Activated CD4-positive, alpha-beta T cell treated with anti-CD3 and anti-CD28 coated beads for 36 hours (primary cell): ENCODE measurements at regions of chr16 and their contacts with region 1.

Region 1: GRCh38 chr16:66751303-66751991 is at the start of gene DYNC1LI2:
- DNase-seq: peak; percentile 89
- ATAC-seq: peak; percentile 93
- H3K4me3 Mint-ChIP-seq: peak within 1 kb of the TSS; percentile 81
- H3K27ac Mint-ChIP-seq: peak within 1 kb of the TSS; percentile 80
- H3K4me1 Mint-ChIP-seq: peaks cover 38% of the 10 kb centered on the region
- H3K27me3 Mint-ChIP-seq: peaks cover 9% of the 10 kb centered on the region
- total RNA-seq, gene DYNC1LI2: 32.3 to 35.7 TPM

Region 2: GRCh38 chr16:66304151-66304550 is 447.3 kb before region 1 on chr16:
- CTCF ChIA-PET with region 1: no interaction called
- POLR2A ChIA-PET with region 1: no interaction called
- intact Hi-C with region 1: no loop called
- DNase-seq: no peak
- ATAC-seq: no peak
- H3K4me3 Mint-ChIP-seq: no peak overlapping the region
- H3K27ac Mint-ChIP-seq: no peak overlapping the region
- H3K4me1 Mint-ChIP-seq: peaks cover 6% of the 10 kb centered on the region
- H3K27me3 Mint-ChIP-seq: no peaks in the 10 kb centered on the region

Region 3: GRCh38 chr16:66552286-66553177 is 198.9 kb before region 1 on chr16 and contains the start of gene CKLF:
- CTCF ChIA-PET with region 1: interaction called, 6 read pairs
- POLR2A ChIA-PET with region 1: no interaction called
- intact Hi-C with region 1: loop called in 1 of 2 experiments (anchors 5 kb)
- DNase-seq: peak; percentile 94
- ATAC-seq: peak; percentile 73
- H3K4me3 Mint-ChIP-seq: peak within 1 kb of the TSS; percentile 97
- H3K27ac Mint-ChIP-seq: peak within 1 kb of the TSS; percentile 94
- H3K4me1 Mint-ChIP-seq: peaks cover 76% of the 10 kb centered on the region
- H3K27me3 Mint-ChIP-seq: no peaks in the 10 kb centered on the region
- total RNA-seq, gene CKLF: 93.5 to 122 TPM

Region 4: DNA sequence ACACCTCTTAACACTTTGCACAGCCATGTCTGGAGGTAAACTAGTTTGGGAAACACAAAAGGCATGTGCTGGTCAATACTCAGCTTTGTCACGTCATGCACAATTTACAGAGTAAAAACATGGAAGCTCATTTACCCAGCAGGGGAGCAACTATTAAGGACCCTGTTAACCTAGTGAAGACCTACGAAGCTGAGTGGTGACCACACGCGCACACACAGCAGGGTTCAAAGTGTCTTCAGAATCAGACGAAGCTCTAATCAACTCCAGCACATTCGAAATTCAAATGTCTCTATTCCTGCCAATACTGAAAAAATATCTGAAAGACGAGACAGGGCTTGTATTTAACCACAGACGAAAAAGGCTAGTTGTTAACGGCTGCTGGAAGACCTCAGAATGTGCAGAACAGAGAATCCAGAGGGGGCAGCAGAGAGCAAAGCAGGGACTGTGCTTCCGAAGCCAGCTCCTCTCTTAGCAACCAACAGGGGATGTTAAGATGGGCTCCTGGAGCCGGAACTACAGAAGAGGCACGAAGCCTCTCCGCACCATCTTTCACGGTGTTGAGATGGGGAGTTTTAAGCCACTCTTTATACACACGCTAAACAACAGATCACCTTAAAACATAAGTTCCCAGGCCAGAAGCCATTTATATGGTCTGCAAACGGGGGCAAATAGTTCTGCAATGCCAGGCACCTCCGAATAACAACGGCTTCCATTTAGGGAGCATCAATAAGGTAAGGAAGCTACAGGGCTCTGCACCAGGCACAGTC is 100.6 kb before region 1 on chr16:
- CTCF ChIA-PET with region 1: interaction called, 12 read pairs
- POLR2A ChIA-PET with region 1: no interaction called
- intact Hi-C with region 1: no loop called
- DNase-seq: peak; percentile 89
- ATAC-seq: peak; percentile 100
- H3K4me3 Mint-ChIP-seq: peak overlapping the region; percentile 18
- H3K27ac Mint-ChIP-seq: peak overlapping the region; percentile 26
- H3K4me1 Mint-ChIP-seq: peaks cover 10% of the 10 kb centered on the region
- H3K27me3 Mint-ChIP-seq: no peaks in the 10 kb centered on the region

Region 5: GRCh38 chr16:66740010-66740409 is 11.4 kb before region 1 on chr16:
- CTCF ChIA-PET with region 1: interaction called, 16 read pairs
- POLR2A ChIA-PET with region 1: no interaction called
- intact Hi-C with region 1: no loop called
- DNase-seq: peak; percentile 48
- ATAC-seq: peak; percentile 72
- H3K4me3 Mint-ChIP-seq: no peak overlapping the region
- H3K27ac Mint-ChIP-seq: no peak overlapping the region
- H3K4me1 Mint-ChIP-seq: peaks cover 16% of the 10 kb centered on the region
- H3K27me3 Mint-ChIP-seq: no peaks in the 10 kb centered on the region

Region 6: DNA sequence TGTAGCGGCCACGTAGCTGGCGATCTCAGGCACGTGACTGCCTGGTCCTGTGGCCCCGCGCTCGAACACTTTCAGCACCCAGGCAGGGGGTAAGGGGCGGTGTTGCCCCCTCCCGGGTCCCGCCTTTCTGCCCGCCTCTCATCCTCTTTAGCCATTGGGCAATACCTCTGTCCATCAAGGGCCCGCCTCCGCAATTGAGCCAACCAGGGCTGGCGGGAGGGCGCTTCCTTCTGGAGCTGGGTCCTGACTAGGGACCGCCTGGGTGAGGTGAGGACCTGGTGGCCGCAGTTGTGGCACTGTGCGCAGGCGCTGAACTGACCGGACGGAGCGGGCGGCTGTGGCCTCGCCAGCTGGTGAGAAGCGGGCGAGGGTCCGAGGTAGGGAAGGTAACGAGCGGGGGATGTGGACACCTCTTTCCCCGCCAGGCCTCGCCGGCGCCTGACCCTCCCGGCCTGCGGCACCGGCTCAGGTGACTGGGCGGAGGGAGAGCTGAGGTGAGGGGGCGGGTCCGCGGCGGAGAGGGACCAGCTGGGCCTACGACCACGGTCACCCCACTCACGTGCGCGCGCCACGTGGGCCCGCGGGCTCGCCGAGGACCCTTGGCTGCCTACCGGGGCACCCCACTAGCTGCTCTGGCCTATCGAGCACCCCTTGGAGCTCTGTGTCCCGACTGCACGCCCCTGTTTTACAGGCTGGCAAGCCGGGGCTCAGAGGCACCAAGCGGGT is 129.0 kb after region 1 on chr16 and contains the start of gene PDP2:
- CTCF ChIA-PET with region 1: no interaction called
- POLR2A ChIA-PET with region 1: no interaction called
- intact Hi-C with region 1: loop called in 1 of 2 experiments (anchors 2 kb)
- DNase-seq: peak; percentile 95
- ATAC-seq: peak; percentile 90
- H3K4me3 Mint-ChIP-seq: peak within 1 kb of the TSS; percentile 90
- H3K27ac Mint-ChIP-seq: peak within 1 kb of the TSS; percentile 96
- H3K4me1 Mint-ChIP-seq: peaks cover 48% of the 10 kb centered on the region
- H3K27me3 Mint-ChIP-seq: no peaks in the 10 kb centered on the region
- total RNA-seq, gene PDP2: 27.8 to 36.6 TPM

Region 7: DNA sequence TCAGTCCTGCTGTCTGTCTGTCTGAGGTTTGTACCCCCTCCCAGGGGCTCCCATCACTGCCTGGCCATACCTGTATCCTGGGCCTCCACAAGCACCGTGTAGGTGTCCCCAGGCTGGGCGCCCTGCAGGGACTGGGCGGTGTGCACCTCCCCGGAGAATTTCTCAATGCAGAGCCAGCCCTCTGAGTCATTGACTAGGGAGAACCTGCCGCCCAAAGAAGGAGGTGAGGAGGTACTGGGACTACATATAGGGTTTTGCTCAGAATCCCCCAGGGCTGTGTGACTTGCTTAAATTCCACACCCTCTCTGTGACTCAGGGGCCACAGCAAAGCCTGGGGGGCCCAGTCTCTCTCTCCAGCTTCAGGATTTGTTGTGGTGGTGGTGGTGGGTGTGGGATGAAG is 159.7 kb after region 1 on chr16:
- CTCF ChIA-PET with region 1: no interaction called
- POLR2A ChIA-PET with region 1: no interaction called
- intact Hi-C with region 1: no loop called
- DNase-seq: no peak
- ATAC-seq: no peak
- H3K4me3 Mint-ChIP-seq: no peak overlapping the region
- H3K27ac Mint-ChIP-seq: no peak overlapping the region
- H3K4me1 Mint-ChIP-seq: peaks cover 2% of the 10 kb centered on the region
- H3K27me3 Mint-ChIP-seq: no peaks in the 10 kb centered on the region

Region 8: GRCh38 chr16:66934153-66934838 is 182.8 kb after region 1 on chr16 and contains the start of gene CIAO2B:
- CTCF ChIA-PET with region 1: no interaction called
- POLR2A ChIA-PET with region 1: no interaction called
- intact Hi-C with region 1: loop called in 1 of 2 experiments (anchors 1 kb)
- DNase-seq: peak; percentile 93
- ATAC-seq: peak; percentile 84
- H3K4me3 Mint-ChIP-seq: peak within 1 kb of the TSS; percentile 99
- H3K27ac Mint-ChIP-seq: peak within 1 kb of the TSS; percentile 96
- H3K4me1 Mint-ChIP-seq: peaks cover 57% of the 10 kb centered on the region
- H3K27me3 Mint-ChIP-seq: no peaks in the 10 kb centered on the region
- total RNA-seq, gene CIAO2B: 171 to 186 TPM